Activated T-helper 1 cell treated with anti-CD3 and anti-CD28 coated beads, Interleukin-12 subunit alpha, Interleukin-12 subunit beta, Interleukin-2, Interleukin-4 antibody, amounts not matched to agents 30 ng/mL and 10 ng/mL and 1 ng/mL, durations not matched to agents 14 hours and 24 hours and 36 hours (primary cell): ENCODE measurements at regions of chr20 and their contacts with region 1.

Region 1: DNA sequence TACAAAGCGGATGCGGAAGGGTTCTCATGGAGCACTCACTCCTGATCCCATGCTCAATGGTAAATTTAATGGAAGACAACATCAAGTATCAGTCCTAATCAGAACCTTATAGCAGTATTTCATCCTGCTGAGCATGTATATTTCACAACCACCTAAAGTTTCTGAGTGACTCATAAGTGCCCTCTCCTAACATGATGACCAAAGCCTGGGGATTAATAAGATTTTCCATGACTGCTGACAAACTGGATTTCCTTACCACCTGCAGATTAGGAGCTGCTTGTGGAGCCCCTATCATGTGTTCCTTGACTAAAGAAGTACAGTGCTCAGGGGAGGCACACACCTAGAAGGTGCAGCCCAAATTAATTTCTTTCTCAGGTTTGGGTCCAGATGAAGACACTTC is 112.8 kb downstream of the INSM1 start:
- DNase-seq: no peak
- H3K4me3 Mint-ChIP-seq: peak overlapping the region; percentile 58
- H3K27ac Mint-ChIP-seq: peak overlapping the region; percentile 78
- H3K4me1 Mint-ChIP-seq: peaks cover 44% of the 10 kb centered on the region
- H3K27me3 Mint-ChIP-seq: no peaks in the 10 kb centered on the region

Region 2: GRCh38 chr20:20497242-20497978 is 16.7 kb after region 1 on chr20:
- intact Hi-C with region 1: loop called (anchors 2 kb)
- DNase-seq: no peak
- H3K4me3 Mint-ChIP-seq: peak overlapping the region; percentile 32
- H3K27ac Mint-ChIP-seq: peak overlapping the region; percentile 90
- H3K4me1 Mint-ChIP-seq: peaks cover 56% of the 10 kb centered on the region
- H3K27me3 Mint-ChIP-seq: no peaks in the 10 kb centered on the region